K562 (cell line): ENCODE measurements at regions of chr14 and their contacts with region 1.

Region 1: GRCh38 chr14:50060871-50061663 is 55.3 kb downstream of the VCPKMT start:
- DNase-seq: peak; percentile 60 to 82 (median 71)
- ATAC-seq: peak; percentile 72
- H3K4me3 ChIP-seq: no peak overlapping the region
- H3K27ac ChIP-seq: peak overlapping the region; percentile 90
- H3K4me1 ChIP-seq: peaks cover 39 to 68% of the 10 kb centered on the region in 2 experiments
- H3K27me3 ChIP-seq: no peaks in the 10 kb centered on the region
- CTCF ChIP-seq: peak; percentile 8 to 17 (median 10); a peak in 1 of 6 replicates
- EP300 ChIP-seq: peak; percentile 81
- POLR2A ChIP-seq: no peak
- RAD21 ChIP-seq: no peak; a peak in 1 of 4 replicates

Region 2: DNA sequence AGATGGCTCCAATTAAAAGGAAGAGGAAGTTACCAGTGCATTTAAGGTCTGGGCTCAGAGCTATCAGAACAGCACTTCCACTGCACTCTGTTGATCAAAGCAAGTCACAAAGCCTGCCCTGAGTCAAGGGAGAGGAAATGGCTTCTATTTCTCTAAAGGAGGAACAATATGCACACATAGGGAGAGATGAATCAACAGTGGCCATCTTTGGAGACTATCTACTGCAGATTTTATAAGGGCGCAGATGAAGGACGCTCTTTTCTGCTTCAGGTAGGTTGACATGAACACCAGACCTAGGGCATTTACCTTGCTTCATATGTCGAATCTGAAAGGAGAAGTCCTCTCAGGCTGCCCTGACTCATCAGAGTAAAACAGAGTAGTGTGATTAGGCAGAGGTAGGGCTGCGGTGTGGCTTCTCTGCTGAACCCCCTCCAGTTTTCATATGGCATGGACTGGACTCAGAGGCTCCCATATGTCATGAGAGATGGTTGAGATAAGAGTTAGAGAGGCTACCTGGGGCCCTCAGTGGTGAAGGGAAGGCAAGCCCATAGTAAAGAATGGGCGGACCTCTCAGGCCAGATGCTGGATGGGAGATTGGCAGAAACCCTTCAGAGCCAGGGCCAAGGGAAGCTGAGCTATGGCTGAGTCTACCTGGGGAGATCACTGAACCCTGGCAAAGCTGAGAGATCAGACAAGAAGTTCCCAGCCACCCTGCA is 83.8 kb before region 1 on chr14:
- CTCF ChIA-PET with region 1: no interaction called
- POLR2A ChIA-PET with region 1: no interaction called
- in situ Hi-C with region 1: no loop called
- intact Hi-C with region 1: no loop called
- DNase-seq: peak; percentile 27 to 37 (median 32)
- ATAC-seq: peak; percentile 66
- H3K4me3 ChIP-seq: no peak overlapping the region
- H3K27ac ChIP-seq: peak overlapping the region; percentile 29; the same call in 2 of the 3 replicates
- H3K4me1 ChIP-seq: peaks cover 7 to 16% of the 10 kb centered on the region in 2 experiments; a peak in 4 of 5 replicates
- H3K27me3 ChIP-seq: no peaks in the 10 kb centered on the region
- CTCF ChIP-seq: no peak
- EP300 ChIP-seq: no peak
- POLR2A ChIP-seq: no peak
- RAD21 ChIP-seq: 0 out of 4 replicates have a peak, but pooled peaks of 1 of the 2 experiments have one; percentile 3

Region 3: DNA sequence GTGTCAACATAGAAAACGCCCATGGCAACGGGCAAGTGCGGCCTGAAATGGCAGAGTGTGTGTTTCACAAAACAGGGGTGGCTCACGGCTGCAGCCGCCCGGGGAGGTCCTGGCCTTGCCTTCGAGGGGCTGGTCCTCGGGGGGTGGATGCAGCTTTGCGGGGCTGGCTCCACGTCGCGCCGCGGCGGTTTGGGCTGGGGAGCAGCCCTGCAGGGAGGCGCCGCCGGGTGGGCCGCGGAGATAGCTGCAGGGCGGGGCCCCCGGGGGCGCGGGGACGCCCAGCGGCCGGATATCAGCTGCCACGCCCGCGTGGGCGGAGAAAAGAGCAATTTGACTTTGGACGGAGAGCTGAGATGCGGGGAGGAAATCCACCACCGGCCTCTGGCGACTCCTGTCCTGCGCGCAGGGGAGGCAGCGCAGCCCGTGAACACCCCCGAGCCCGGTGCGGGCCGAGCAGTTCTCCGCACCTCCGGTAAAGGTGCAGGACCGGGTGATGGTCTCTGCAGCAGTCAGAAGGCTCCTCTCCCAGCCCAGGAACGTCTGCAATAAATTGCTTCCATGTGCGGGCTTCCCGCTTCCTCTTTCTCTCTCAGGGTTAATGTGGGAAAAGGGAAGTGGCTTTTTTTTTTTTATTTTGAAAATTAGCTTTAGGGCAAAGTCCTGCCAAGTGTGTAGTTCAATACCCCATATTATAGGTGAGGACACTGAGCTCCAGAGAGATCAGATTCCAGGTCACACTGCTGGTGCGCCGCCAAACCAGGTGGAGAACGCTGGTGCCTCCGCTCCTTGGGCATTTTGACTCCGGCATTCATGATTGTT is 57.6 kb before region 1 on chr14:
- CTCF ChIA-PET with region 1: no interaction called
- POLR2A ChIA-PET with region 1: interaction called, 4 read pairs
- in situ Hi-C with region 1: no loop called
- intact Hi-C with region 1: loop called (anchors 5 kb)
- DNase-seq: peak; percentile 92 to 94 (median 94)
- ATAC-seq: peak; percentile 84
- H3K4me3 ChIP-seq: peak overlapping the region; percentile 46
- H3K27ac ChIP-seq: peak overlapping the region; percentile 92
- H3K4me1 ChIP-seq: peaks cover 50 to 54% of the 10 kb centered on the region in 2 experiments
- H3K27me3 ChIP-seq: no peaks in the 10 kb centered on the region
- CTCF ChIP-seq: peak in 1 of 3 experiments; percentile 36; a peak in 1 of 6 replicates
- EP300 ChIP-seq: peak; percentile 85
- POLR2A ChIP-seq: peak; percentile 75
- RAD21 ChIP-seq: peak; percentile 36 to 41; a peak in 3 of 4 replicates